ENCODE measurements at regions of chr1 and their contacts with region 1.

Region 1: GRCh38 chr1:167263819-167264464 is 43.3 kb downstream of the POU2F1 start:
- DNase-seq: no peak

Region 2: GRCh38 chr1:167227934-167228378 is 36.0 kb before region 1 on chr1:
- intact Hi-C with region 1: loop called (anchors 5 kb)
- DNase-seq: no peak

Region 3: DNA sequence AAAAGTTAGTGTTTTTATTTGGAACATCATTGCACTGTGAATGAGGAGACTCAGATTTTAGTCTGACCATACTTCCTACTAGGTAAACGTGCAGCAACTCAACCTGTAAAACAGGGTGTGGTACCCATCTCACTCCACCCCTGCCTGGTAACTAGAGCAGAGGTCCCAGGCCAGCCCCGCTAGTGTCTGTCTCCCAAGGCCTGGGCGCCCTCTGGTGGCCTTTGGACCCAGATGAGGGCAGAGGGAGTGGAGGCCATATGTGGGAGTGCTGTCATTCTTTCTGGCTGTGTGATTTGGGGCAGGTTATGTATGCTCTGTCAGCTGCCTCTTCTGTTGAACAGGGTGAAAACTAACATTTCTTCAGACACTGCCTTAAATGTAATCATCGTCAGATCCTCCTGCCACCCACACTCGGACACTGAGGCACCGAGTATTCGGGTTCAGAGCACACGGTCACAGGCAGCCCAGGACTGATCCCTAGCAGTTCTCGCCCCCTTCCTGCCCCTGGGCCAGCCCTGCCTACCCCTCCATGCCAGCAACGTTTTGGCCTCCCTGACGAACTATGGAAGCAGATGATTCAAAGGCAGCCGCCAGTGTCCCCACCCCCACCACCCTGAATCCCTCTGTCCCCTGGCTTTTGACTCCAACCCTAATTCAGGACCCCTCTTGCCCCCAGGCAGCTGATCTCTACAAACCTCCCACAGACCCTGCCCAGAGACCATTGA is 178.3 kb after region 1 on chr1:
- intact Hi-C with region 1: loop called (anchors 1 kb)
- DNase-seq: peak; percentile 89

Region 4: DNA sequence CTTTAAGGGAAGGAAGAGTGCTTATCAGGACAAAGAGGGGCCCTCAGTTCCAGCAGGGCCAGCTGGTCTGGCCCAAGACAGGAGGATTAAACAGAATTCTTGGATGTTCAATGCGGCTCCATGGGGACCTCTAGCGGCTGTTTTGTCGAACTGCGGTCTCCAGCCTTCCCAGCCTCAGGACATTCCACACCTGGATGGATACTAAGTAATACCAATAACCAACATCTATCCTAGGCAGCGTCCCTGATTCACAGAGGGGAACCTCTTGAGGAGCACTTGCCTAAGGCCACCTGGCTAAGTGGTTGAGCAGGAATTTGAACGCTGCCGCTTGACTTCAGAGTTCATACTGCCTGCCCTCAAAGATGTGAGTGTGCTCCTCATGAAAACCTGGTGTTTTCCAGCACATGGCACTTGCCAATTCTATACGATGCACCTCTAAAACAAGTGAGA is 269.9 kb after region 1 on chr1:
- intact Hi-C with region 1: loop called (anchors 5 kb)
- DNase-seq: peak; percentile 83

Measured in cardiac septum (tissue), 1 donor.